PC-9 (cell line): ENCODE measurements at regions of chr11 and their contacts with region 1.

Region 1: DNA sequence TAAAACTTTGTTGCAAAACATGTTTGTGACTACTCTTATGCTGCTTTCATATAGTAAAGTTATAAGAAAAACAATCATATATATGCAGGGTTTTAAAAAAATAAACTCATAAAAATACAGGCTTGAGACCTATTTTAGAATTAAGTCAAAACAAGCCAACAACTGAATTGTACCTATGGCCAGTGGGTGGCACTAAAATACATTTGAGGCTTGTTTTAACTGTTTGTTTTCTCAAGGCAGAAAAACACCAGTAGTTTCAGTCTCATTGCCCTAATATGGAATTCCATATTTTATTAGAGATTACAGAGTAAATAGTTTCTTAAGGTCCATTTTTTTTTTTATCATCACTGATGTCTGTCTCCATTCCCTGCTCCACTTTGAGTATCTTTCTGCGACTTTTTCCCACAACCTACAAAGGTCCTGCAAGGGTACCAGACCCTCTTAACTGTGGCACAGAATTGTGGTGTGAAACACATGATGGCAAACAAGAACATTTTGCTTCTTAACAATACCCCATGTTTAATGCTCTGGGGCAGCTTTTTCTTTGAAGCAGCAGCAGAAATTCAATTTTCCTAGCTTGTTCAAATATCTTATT is 8.5 kb upstream of the CCDC89 start:
- DNase-seq: peak in 1 of 2 experiments; percentile 48
- H3K4me3 ChIP-seq: no peak overlapping the region
- H3K27ac ChIP-seq: no peak overlapping the region
- H3K4me1 ChIP-seq: peaks cover 14% of the 10 kb centered on the region; the same call in 1 of the 2 replicates
- H3K27me3 ChIP-seq: no peaks in the 10 kb centered on the region
- CTCF ChIP-seq: peak; percentile 82

Region 2: GRCh38 chr11:85805387-85805786 is 110.9 kb after region 1 on chr11:
- CTCF ChIA-PET with region 1: interaction called, 8 read pairs
- POLR2A ChIA-PET with region 1: interaction called, 17 read pairs
- intact Hi-C with region 1: no loop called
- DNase-seq: no peak
- H3K4me3 ChIP-seq: no peak overlapping the region
- H3K27ac ChIP-seq: no peak overlapping the region
- H3K4me1 ChIP-seq: peaks cover 17% of the 10 kb centered on the region
- H3K27me3 ChIP-seq: no peaks in the 10 kb centered on the region
- CTCF ChIP-seq: no peak

Region 3: DNA sequence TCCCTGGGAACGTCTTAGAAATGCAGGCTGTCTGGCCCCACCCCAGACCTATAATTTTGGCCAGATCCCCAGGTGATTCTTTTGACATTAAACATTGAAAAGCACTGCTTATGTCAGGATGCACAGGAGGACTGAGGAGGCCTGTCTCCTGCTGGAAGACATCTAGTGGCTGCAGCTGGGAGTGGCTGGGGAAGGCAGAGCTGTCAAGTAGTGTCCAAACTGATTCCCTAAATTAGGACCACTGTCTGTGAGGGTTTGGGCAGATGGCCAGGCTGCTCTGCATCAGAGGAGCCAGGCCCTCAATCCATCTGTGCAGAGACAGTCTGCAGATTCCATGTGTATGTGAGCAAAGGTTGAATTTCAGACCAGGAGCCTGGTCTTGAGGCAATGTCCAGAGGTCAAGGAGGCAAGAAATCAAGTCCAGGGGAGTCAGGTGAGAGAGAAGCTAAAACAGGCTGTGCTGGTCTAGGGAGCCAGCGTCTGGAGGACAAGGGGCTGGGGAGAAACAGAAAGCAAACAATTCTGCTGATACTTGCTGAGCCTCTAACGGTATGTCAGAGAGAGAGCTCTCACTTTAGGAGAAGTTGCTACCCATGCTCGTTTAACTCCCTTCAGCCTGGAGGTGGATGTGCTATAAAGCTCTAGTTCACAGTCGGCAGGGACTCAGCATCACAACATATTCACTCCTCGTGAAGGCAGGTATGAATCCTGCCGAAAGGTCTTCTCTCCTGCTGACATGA is 131.8 kb after region 1 on chr11:
- CTCF ChIA-PET with region 1: no interaction called
- POLR2A ChIA-PET with region 1: no interaction called
- intact Hi-C with region 1: loop called (anchors 10 kb)
- DNase-seq: peak in 1 of 2 experiments; percentile 41
- H3K4me3 ChIP-seq: no peak overlapping the region
- H3K27ac ChIP-seq: peak overlapping the region; percentile 93
- H3K4me1 ChIP-seq: peaks cover 68% of the 10 kb centered on the region
- H3K27me3 ChIP-seq: no peaks in the 10 kb centered on the region
- CTCF ChIP-seq: peak; percentile 69

Region 4: GRCh38 chr11:85941380-85941973 is 247.0 kb after region 1 on chr11:
- CTCF ChIA-PET with region 1: no interaction called
- POLR2A ChIA-PET with region 1: no interaction called
- intact Hi-C with region 1: loop called (anchors 10 kb)
- DNase-seq: peak in 1 of 2 experiments; percentile 22
- H3K4me3 ChIP-seq: no peak overlapping the region
- H3K27ac ChIP-seq: no peak overlapping the region
- H3K4me1 ChIP-seq: no peaks in the 10 kb centered on the region
- H3K27me3 ChIP-seq: no peaks in the 10 kb centered on the region
- CTCF ChIP-seq: peak; percentile 69

Region 5: GRCh38 chr11:86291466-86292262 is 597.2 kb after region 1 on chr11:
- CTCF ChIA-PET with region 1: interaction called, 13 read pairs
- POLR2A ChIA-PET with region 1: no interaction called
- intact Hi-C with region 1: no loop called
- DNase-seq: peak; percentile 41 to 60
- H3K4me3 ChIP-seq: no peak overlapping the region
- H3K27ac ChIP-seq: no peak overlapping the region
- H3K4me1 ChIP-seq: no peaks in the 10 kb centered on the region
- H3K27me3 ChIP-seq: no peaks in the 10 kb centered on the region
- CTCF ChIP-seq: peak; percentile 95